ENCODE measurements at regions of chr13 and their contacts with region 1.

Region 1: GRCh38 chr13:46160471-46161066 is 21.4 kb downstream of the LCP1 start:
- DNase-seq: peak in 3 of 5 donors; percentile 25 to 71 (median 70)
- H3K4me3 ChIP-seq: peak overlapping the region; percentile 13
- H3K4me3 Mint-ChIP-seq: peak overlapping the region; percentile 28 to 85 (median 77)
- H3K27ac ChIP-seq: no peak overlapping the region
- H3K27ac Mint-ChIP-seq: peak overlapping the region; percentile 82 to 97 (median 94)
- H3K4me1 ChIP-seq: peaks cover 51% of the 10 kb centered on the region
- H3K4me1 Mint-ChIP-seq: peaks cover 49 to 72% (median 66%) of the 10 kb centered on the region in 3 donors
- H3K27me3 ChIP-seq: no peaks in the 10 kb centered on the region
- H3K27me3 Mint-ChIP-seq: no peaks in the 10 kb centered on the region

Region 2: GRCh38 chr13:46143184-46143701 is 17.3 kb before region 1 on chr13:
- CTCF ChIA-PET with region 1: interaction called, 15 read pairs
- POLR2A ChIA-PET with region 1: no interaction called
- DNase-seq: no peak
- H3K4me3 ChIP-seq: no peak overlapping the region
- H3K4me3 Mint-ChIP-seq: peak overlapping the region in 1 of 7 donors; percentile 4
- H3K27ac ChIP-seq: no peak overlapping the region
- H3K27ac Mint-ChIP-seq: peak overlapping the region in 7 of 8 donors; percentile 19 to 86 (median 71)
- H3K4me1 ChIP-seq: no peaks in the 10 kb centered on the region
- H3K4me1 Mint-ChIP-seq: peaks cover 14 to 46% (median 44%) of the 10 kb centered on the region in 3 donors
- H3K27me3 ChIP-seq: no peaks in the 10 kb centered on the region
- H3K27me3 Mint-ChIP-seq: no peaks in the 10 kb centered on the region

Region 3: DNA sequence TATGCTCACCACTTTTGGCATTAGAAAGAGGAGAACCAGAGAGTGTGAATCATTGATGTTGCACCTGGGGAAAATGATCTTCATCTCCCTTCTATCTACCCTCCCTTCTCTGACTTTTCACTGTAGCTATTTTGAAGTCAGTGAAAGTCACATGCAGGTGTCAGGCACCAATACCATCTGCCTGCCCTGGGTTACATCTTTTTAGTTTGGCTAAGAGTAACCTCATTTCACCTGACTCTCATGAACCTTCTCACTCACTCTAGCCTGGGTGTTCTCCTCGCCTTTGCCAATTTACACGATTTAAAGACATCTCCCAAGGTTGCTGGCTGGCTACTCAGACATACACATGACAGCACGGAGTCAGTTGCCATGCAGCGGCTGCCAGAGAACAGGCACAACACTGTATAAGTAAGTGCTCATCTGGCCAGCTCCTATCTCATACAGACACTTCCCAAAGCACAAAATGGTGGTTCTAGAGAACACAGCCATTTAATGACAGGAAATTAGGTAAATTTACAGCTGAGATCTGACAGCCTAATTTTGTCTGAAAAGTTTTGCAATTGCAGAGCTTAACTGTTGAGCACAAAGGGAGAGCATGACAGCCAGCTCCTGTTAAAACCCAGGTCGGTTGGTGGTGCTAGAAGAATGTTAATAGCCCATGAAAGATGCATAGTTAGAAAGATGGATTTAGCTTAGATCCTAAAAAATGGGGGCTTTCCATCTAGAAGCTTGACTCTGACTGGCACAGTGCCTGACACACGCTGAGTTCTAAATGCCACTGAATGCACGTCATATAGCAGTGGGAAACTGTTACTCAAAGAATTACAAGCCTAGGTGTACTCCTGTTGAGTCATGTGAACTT is 11.1 kb before region 1 on chr13:
- CTCF ChIA-PET with region 1: interaction called, 14 read pairs
- POLR2A ChIA-PET with region 1: no interaction called
- DNase-seq: no peak
- H3K4me3 ChIP-seq: no peak overlapping the region
- H3K4me3 Mint-ChIP-seq: no peak overlapping the region
- H3K27ac ChIP-seq: no peak overlapping the region
- H3K27ac Mint-ChIP-seq: peak overlapping the region; percentile 55 to 96 (median 89)
- H3K4me1 ChIP-seq: no peaks in the 10 kb centered on the region
- H3K4me1 Mint-ChIP-seq: peaks cover 38 to 53% (median 52%) of the 10 kb centered on the region in 3 donors
- H3K27me3 ChIP-seq: no peaks in the 10 kb centered on the region
- H3K27me3 Mint-ChIP-seq: no peaks in the 10 kb centered on the region

Region 4: DNA sequence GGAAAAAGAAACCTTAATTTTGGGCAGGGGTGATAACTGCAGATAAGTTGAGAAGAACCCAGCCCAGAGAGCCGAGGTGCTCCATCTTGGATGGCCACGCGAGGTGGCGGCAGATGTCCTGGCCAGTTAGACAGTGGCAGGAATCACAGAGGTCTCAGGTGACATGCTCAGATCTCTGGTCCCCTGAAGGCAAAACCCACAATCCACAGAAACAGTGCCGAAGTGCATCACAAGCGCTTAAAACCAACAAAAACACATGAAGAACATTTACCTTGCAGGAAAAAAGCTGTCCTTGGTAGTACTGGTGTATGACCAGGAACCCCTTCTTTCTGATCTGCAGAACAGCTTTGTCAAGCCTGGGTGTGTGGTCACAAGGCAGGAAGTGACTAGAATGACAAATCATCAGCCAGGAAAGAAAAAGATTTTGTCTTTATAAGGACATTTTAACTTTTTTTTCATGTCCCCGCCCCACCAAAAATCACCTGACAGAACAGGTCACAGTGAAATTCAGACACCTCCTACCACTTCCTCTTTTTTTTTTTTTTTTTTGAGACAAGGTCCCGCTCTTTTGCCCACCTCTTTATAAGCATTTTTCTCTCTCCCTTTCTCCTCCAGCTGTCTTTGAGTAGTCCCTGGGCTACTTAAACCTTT is 21.4 kb after region 1 on chr13 and contains the start of gene LCP1:
- CTCF ChIA-PET with region 1: interaction called, 128 read pairs
- POLR2A ChIA-PET with region 1: interaction called, 6 read pairs
- DNase-seq: peak; percentile 60 to 91 (median 90)
- H3K4me3 ChIP-seq: peak within 1 kb of the TSS; percentile 81
- H3K4me3 Mint-ChIP-seq: peak within 1 kb of the TSS; percentile 97 to 100 (median 98)
- H3K27ac ChIP-seq: peak within 1 kb of the TSS; percentile 82
- H3K27ac Mint-ChIP-seq: peak within 1 kb of the TSS; percentile 89 to 99 (median 97)
- H3K4me1 ChIP-seq: peaks cover 44% of the 10 kb centered on the region
- H3K4me1 Mint-ChIP-seq: peaks cover 56 to 67% (median 58%) of the 10 kb centered on the region in 3 donors
- H3K27me3 ChIP-seq: no peaks in the 10 kb centered on the region
- H3K27me3 Mint-ChIP-seq: peaks cover 0 to 7% of the 10 kb centered on the region in 2 donors
- total RNA-seq, gene LCP1: 838 to 869 TPM

Region 5: GRCh38 chr13:46211483-46212351 is 51.1 kb after region 1 on chr13 and contains the start of gene LRRC63:
- CTCF ChIA-PET with region 1: interaction called, 11 read pairs
- POLR2A ChIA-PET with region 1: no interaction called
- DNase-seq: peak; percentile 74 to 90 (median 81)
- H3K4me3 ChIP-seq: peak within 1 kb of the TSS; percentile 79
- H3K4me3 Mint-ChIP-seq: peak within 1 kb of the TSS; percentile 90 to 94 (median 92)
- H3K27ac ChIP-seq: peak within 1 kb of the TSS; percentile 90
- H3K27ac Mint-ChIP-seq: peak within 1 kb of the TSS; percentile 78 to 98 (median 96)
- H3K4me1 ChIP-seq: peaks cover 16% of the 10 kb centered on the region
- H3K4me1 Mint-ChIP-seq: peaks cover 19 to 38% (median 20%) of the 10 kb centered on the region in 3 donors
- H3K27me3 ChIP-seq: no peaks in the 10 kb centered on the region
- H3K27me3 Mint-ChIP-seq: no peaks in the 10 kb centered on the region
- total RNA-seq, gene LRRC63: 0.55 TPM

Region 6: DNA sequence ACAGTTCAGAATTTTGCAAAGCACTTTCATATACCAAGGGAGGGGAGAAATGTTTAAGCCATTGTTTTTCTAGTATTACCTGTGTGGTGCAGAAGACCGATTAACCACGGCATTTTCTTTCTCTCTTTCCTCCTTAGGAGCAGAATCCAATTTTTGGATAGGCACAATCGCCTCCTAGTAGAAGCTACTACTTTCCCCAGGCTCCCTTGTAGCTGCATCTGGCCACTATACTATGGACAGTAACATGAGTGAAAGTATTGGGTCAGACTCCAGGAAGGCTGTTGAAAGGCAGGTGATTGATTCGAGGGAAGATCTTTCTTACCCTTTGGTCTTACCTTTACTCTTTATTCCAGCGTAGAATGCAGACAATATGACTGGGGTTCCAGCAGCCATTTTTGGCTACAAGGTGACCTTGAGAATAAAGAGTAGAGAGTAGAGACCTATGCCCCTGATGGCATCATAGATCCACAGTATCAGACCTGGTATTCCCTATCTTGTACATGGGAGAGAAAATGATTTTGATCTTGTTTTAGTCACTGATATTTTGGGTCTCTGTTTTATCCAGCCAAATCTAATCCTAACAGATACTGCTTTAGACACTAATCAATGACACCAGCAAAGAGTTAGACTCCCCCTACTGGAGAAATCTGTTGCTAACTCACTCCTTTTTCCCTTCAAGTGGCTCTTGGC is 128.1 kb after region 1 on chr13:
- CTCF ChIA-PET with region 1: interaction called, 21 read pairs
- POLR2A ChIA-PET with region 1: no interaction called
- DNase-seq: peak in 2 of 5 donors; percentile 57 to 65
- H3K4me3 ChIP-seq: no peak overlapping the region
- H3K4me3 Mint-ChIP-seq: no peak overlapping the region
- H3K27ac ChIP-seq: no peak overlapping the region
- H3K27ac Mint-ChIP-seq: peak overlapping the region in 5 of 8 donors; percentile 35 to 79 (median 60)
- H3K4me1 ChIP-seq: peaks cover 3% of the 10 kb centered on the region
- H3K4me1 Mint-ChIP-seq: peaks cover 14 to 20% (median 17%) of the 10 kb centered on the region in 3 donors
- H3K27me3 ChIP-seq: no peaks in the 10 kb centered on the region
- H3K27me3 Mint-ChIP-seq: peaks cover 0 to 1% of the 10 kb centered on the region in 2 donors

Region 7: GRCh38 chr13:46321494-46322225 is 161.1 kb after region 1 on chr13:
- CTCF ChIA-PET with region 1: interaction called, 28 read pairs
- POLR2A ChIA-PET with region 1: no interaction called
- DNase-seq: peak; percentile 54 to 80 (median 68)
- H3K4me3 ChIP-seq: peak overlapping the region; percentile 29
- H3K4me3 Mint-ChIP-seq: peak overlapping the region; percentile 48 to 86 (median 77)
- H3K27ac ChIP-seq: no peak overlapping the region
- H3K27ac Mint-ChIP-seq: peak overlapping the region; percentile 79 to 99 (median 94)
- H3K4me1 ChIP-seq: peaks cover 12% of the 10 kb centered on the region
- H3K4me1 Mint-ChIP-seq: peaks cover 25 to 34% (median 29%) of the 10 kb centered on the region in 3 donors
- H3K27me3 ChIP-seq: no peaks in the 10 kb centered on the region
- H3K27me3 Mint-ChIP-seq: peaks cover 1 to 5% of the 10 kb centered on the region in 2 donors

Measured in CD8-positive, alpha-beta memory T cell (primary cell).